ENCODE measurements at regions of chr16 and their contacts with region 1.

Region 1: GRCh38 chr16:75566040-75566810 is at the start of gene GABARAPL2:
- DNase-seq: peak; percentile 76 to 93 (median 88)
- H3K4me3 ChIP-seq: peak within 1 kb of the TSS; percentile 96
- H3K27ac ChIP-seq: peak within 1 kb of the TSS in 1 of 2 donors; percentile 31
- H3K4me1 ChIP-seq: peaks cover 9% of the 10 kb centered on the region
- H3K27me3 ChIP-seq: no peaks in the 10 kb centered on the region
- CTCF ChIP-seq: no peak
- EP300 ChIP-seq: no peak
- POLR2A ChIP-seq: peak; percentile 61
- total RNA-seq, gene GABARAPL2: 77.9 to 114 (median 108) TPM

Region 2: DNA sequence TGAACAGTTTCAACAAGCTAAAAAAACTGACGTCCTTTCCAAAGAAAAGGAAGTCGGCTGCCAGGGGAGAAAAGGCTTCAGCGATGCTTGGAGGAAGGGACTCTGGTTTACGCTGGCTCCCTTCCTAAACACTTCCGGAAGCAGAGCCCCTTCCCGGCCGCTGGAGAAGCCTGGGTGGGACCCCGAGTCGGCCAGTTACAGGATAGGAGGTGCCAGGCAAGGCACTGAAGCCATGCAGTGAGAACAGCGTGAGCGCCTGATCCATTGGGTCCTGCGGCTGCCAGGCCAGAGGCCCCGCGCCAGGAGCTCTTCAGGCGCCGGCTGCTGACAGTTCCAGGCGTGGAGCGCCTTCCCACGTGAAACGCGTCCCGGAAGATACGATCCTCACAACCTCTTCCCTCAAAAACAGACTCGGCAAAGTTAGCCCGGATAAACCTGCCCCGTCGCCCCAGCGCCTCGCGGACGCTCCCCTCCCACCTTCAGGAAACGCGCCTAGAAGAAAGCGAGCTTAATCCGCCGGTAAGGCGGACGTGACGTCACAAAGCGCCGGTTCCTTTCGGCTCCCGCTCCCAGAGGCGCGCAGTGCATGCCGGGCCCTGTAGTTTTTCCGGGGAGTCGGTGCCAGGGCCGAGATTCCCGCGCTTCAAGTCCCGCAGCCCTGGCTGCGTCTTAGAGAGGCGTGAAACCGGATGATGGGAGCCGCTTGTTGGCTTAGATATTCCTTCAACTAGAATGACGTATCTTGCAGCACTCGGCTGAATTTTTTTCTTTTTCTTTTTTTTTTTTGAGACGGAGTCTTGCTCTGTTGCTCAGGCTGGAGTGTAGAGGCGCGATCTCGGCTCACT is 56.8 kb after region 1 on chr16 and contains the start of gene ADAT1:
- intact Hi-C with region 1: loop called in 1 of 4 experiments (anchors 10 kb)
- DNase-seq: peak; percentile 97 to 99 (median 98)
- H3K4me3 ChIP-seq: peak within 1 kb of the TSS; percentile 80
- H3K27ac ChIP-seq: peak within 1 kb of the TSS in 1 of 2 donors; percentile 74
- H3K4me1 ChIP-seq: peaks cover 6% of the 10 kb centered on the region
- H3K27me3 ChIP-seq: no peaks in the 10 kb centered on the region
- CTCF ChIP-seq: no peak
- EP300 ChIP-seq: no peak
- POLR2A ChIP-seq: peak; percentile 86
- total RNA-seq, gene ADAT1: 25.3 to 45.8 (median 27.7) TPM

Region 3: GRCh38 chr16:76287466-76287865 is 721.2 kb after region 1 on chr16:
- intact Hi-C with region 1: no loop called
- DNase-seq: no peak
- H3K4me3 ChIP-seq: no peak overlapping the region
- H3K27ac ChIP-seq: no peak overlapping the region
- H3K4me1 ChIP-seq: no peaks in the 10 kb centered on the region
- H3K27me3 ChIP-seq: no peaks in the 10 kb centered on the region
- CTCF ChIP-seq: no peak
- EP300 ChIP-seq: no peak
- POLR2A ChIP-seq: no peak

Measured in ovary (tissue), 10 donors.